GM10248 (cell line): ENCODE measurements at regions of chr3 and their contacts with region 1.

Region 1: DNA sequence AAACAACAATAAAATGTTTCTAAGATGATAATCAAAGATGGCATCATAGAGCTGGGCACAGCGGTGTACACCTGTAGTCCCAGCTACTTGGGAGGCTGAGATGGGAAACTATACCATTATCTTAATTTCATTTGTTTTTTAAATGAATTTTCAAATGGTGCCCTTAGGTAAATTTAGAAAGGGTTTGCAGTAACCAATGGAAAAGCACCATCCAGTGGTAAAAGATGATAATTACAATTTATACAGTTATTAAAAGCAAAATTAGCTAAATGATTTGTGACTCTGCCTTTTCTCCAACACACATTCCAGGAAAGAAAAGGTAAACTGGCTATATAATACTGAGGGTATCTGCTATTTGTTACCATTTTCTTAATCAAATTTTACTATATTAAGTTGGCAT is 14.4 kb upstream of the ANKRD28 start:
- DNase-seq: peak; percentile 34
- CTCF ChIP-seq: peak; percentile 28

Region 2: DNA sequence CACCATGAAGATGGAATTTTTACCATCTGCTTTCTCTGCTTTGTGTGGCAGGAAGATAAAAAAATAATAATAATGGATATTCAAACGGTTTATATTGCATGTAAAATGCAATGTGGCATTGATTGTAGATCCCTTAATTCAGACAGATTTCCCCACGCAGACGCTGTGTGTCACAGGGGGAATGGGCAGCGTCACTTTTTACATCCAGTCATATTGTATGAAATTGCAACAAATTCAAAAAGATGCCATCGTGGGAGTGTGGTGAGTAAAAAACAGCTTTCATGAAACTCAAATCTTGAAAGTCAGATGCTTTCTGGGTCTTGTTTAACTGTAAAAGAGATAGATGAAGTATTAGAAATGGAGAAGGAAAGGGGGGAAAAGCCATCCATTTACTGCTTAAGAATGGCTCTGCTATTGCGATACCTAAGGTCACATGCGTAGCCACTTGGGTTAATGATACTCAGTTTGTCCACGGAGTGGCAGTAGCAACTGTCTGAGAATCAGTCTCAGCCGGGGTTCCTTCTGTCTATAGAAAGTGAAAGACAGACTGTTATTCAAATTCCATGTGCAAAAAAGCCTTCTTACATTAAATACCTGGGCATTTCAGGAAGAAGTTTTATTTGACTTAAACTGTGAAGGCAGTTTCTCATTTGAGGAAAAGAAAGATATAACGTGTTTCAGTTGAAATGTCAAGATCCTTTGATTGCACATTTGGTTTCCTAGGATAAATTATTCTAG is 182.2 kb before region 1 on chr3:
- CTCF ChIA-PET with region 1: interaction called, 31 read pairs
- POLR2A ChIA-PET with region 1: no interaction called
- DNase-seq: peak; percentile 81
- CTCF ChIP-seq: peak; percentile 75

Region 3: DNA sequence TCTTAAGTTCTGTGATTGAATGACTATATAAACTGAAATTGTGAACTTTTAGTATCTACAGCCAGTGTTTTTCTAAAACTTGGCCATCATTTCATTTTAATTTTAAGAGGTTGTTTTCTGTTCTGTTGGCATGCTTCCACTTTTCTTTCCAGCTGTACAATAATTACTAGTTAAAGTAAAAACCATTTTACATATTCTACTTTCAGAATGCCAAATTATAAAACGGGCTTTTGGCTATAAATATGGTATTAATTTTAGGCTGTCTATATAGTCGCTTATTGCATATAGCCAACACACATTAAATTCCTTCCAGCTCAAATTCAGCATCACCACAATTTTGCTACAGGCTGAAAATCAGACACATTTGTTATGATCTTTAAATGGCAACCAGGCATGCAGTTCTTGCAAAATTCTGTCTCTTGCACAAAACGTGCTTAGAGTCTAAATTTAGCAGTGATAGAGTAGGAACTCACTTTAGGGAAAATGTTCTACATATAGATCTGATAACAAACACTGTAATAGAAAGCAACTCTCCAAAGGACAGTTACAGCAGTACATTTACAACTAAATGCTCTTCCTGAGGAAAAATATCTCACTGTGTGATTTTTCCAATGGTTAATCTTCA is 129.5 kb before region 1 on chr3:
- CTCF ChIA-PET with region 1: interaction called, 11 read pairs
- POLR2A ChIA-PET with region 1: no interaction called
- DNase-seq: no peak
- CTCF ChIP-seq: no peak

Region 4: GRCh38 chr3:15797642-15798303 is 14.4 kb before region 1 on chr3 and contains the start of gene ANKRD28:
- CTCF ChIA-PET with region 1: interaction called, 15 read pairs
- POLR2A ChIA-PET with region 1: no interaction called
- DNase-seq: no peak
- CTCF ChIP-seq: no peak

Region 5: DNA sequence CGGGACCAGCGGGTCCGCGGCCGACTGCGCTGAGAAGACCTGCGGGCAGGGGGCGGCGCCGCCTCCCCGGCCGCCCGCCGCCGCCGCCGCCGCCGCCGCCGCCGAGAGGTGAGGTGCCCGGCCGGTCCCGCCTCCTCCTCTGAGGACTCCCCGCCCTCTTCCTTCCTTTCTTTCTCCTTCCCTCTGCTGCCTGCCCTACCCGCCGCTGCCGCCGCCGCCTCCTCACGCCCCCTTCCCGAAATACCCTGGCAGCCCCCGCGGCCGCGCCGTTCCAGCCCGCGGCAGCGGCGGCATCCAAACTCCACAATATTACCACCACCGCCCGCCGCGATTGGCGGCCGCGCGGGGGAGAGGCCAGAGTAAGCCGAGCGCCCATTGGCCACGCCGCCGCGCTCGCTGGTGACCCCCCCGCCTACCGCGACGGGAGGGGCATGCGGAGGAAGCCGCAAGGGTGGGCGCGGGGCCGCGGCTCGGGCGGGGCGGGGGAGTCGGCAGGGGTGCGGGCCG is 47.4 kb after region 1 on chr3:
- CTCF ChIA-PET with region 1: no interaction called
- POLR2A ChIA-PET with region 1: no interaction called
- DNase-seq: peak; percentile 90
- CTCF ChIP-seq: no peak

Region 6: DNA sequence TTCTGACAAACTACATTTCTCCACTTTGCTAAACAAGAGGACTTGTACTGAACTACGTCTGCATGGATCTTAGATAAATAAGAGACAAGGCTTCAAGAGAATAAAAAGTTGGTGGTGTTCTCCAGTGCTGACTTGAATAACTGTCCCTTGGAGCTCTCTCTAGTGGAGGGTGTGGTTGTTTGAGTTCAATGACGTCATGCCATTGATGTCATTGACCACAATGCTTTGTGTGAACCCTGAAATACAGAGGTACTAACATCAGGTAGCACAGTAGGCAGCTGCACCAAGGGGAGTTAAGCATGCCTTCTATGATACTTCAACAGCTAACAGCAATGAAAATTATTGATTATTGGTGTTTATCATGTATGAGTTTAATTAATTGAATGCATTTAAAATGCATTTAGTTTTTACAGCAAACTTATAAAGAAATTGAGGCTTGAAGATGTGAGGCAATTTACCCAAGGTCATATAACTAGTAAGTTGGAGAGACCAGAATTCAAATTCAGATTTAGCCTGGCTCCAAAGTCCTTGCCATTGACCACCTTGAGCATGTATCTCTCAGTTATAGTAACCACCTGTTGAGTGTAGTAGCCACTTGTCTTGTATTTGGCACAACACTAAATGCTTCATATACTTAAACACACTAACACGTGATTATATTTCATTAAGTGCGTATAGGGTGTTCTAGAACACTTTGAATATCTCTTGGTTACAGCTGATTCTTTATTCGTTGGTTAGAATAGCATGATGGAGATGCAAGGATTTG is 111.6 kb after region 1 on chr3:
- CTCF ChIA-PET with region 1: no interaction called
- POLR2A ChIA-PET with region 1: no interaction called
- DNase-seq: peak; percentile 7
- CTCF ChIP-seq: no peak